ENCODE measurements at regions of chr7 and their contacts with region 1.

Region 1: DNA sequence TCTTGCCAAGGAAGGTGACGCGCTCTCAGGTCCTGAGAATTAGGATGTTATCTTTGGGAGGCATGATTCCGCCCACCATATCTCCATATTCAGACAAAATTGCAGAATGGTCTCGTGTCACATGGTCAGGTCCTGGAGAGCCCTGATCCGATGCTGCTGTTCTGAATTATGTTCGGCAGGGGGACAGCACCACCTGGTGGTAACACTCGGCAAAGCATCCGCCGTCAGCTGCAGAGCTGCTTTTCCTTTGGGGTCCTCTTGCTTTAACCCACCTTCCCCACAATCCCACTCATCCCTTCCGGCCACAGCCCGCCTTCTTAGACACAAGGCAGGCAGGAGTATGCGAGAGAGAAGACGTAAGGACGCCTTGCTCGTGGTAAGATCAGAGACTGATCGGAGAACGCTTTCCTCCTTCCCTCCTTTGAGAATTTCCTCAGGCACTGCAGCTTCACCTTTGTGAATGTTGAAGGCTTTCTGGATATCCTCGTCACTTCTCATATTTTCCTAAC is 327.8 kb upstream of the C7orf33 start:
- DNase-seq: peak; percentile 81 to 92 (median 88)
- H3K4me3 ChIP-seq: peak overlapping the region in 6 of 7 experiments; percentile 31 to 75 (median 58)
- H3K27ac ChIP-seq: no peak overlapping the region
- H3K4me1 ChIP-seq: peaks cover 0 to 12% (median 4%) of the 10 kb centered on the region in 4 experiments
- H3K27me3 ChIP-seq: peaks cover 0 to 2% (median 0%) of the 10 kb centered on the region in 5 experiments

Region 2: GRCh38 chr7:148230296-148230695 is 32.5 kb before region 1 on chr7:
- CTCF ChIA-PET with region 1: no interaction called
- POLR2A ChIA-PET with region 1: no interaction called
- DNase-seq: no peak
- H3K4me3 ChIP-seq: no peak overlapping the region
- H3K27ac ChIP-seq: no peak overlapping the region
- H3K4me1 ChIP-seq: no peaks in the 10 kb centered on the region
- H3K27me3 ChIP-seq: peaks cover 0 to 2% (median 0%) of the 10 kb centered on the region in 5 experiments

Region 3: DNA sequence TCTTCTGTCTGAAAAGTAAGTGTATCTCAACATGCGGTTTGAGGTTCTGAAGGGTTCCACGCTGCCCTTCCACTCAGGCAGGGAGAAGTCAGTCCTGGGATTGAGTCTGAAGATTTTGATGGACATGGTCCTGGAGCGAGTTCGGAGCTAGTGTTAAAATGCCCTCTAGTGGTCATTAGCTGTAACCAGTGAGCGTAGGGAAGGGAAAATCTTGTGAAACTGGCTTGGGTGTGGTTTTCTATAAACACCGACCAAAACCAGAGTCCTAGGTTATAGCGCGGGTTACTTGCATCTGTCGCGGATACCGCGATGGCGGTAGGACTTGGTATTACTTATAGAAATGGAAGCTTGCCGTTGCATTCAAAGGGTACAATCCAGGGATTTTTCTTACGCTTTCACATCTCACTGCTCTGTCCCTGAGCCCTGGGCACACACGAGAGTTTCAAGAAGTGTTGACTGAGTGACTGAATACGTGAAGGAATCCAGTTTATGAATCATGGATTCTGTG is 20.4 kb before region 1 on chr7:
- CTCF ChIA-PET with region 1: interaction called, 19 read pairs
- POLR2A ChIA-PET with region 1: no interaction called
- DNase-seq: peak; percentile 41 to 66 (median 66)
- H3K4me3 ChIP-seq: peak overlapping the region in 1 of 7 experiments; percentile 37
- H3K27ac ChIP-seq: no peak overlapping the region
- H3K4me1 ChIP-seq: no peaks in the 10 kb centered on the region
- H3K27me3 ChIP-seq: peaks cover 0 to 7% (median 3%) of the 10 kb centered on the region in 5 experiments

Region 4: DNA sequence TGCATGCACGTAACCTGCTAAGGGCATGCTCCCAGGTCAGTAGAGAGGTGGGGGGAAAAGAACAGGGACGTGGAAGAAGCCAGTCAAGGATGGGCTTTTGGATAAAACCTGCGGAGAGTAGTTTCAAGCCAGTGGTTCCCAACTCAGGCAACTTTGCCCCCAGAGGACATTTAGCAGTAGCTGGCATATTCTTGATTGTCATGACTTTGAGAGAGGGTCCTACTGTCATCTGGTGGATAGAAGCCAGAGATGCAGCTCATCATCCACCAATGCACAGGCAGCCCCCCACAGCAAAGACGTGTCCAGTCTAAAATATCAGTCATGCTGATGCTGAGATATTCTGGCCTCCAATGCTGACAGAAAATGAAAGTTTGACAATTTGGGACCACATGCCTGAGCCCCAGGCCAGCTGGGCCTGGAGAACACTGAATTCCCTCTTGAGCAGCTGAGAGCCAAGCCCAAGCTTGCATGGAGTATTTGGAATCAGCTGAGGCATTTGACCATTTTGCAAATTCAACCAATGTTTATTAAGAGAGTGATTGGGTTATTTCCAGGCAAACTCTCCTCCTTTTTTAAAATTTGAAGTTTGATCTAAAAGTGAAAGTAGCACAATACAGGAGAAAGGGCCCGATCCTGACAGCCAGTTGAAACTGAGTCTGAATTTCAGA is 217.8 kb after region 1 on chr7:
- CTCF ChIA-PET with region 1: interaction called, 12 read pairs
- POLR2A ChIA-PET with region 1: no interaction called
- DNase-seq: peak; percentile 14 to 40 (median 33)
- H3K4me3 ChIP-seq: peak overlapping the region in 1 of 7 experiments; percentile 11
- H3K27ac ChIP-seq: no peak overlapping the region
- H3K4me1 ChIP-seq: no peaks in the 10 kb centered on the region
- H3K27me3 ChIP-seq: peaks cover 0 to 2% (median 0%) of the 10 kb centered on the region in 5 experiments

Measured in common myeloid progenitor, CD34-positive (primary cell).